ENCODE measurements at regions of chr11 and their contacts with region 1.

Region 1: GRCh38 chr11:112024773-112025678 is at the start of gene DLAT:
- DNase-seq: peak; percentile 80 to 88
- ATAC-seq: peak; percentile 94 to 95
- H3K4me3 ChIP-seq: peak within 1 kb of the TSS; percentile 92 to 96 (median 94)
- H3K27ac ChIP-seq: peak within 1 kb of the TSS; percentile 89 to 98 (median 94)
- H3K4me1 ChIP-seq: peaks cover 11 to 17% of the 10 kb centered on the region in 2 donors
- H3K27me3 ChIP-seq: no peaks in the 10 kb centered on the region
- CTCF ChIP-seq: no peak
- POLR2A ChIP-seq: peak; percentile 35 to 68
- total RNA-seq, gene DLAT: 60.1 to 117 (median 67.8) TPM

Region 2: DNA sequence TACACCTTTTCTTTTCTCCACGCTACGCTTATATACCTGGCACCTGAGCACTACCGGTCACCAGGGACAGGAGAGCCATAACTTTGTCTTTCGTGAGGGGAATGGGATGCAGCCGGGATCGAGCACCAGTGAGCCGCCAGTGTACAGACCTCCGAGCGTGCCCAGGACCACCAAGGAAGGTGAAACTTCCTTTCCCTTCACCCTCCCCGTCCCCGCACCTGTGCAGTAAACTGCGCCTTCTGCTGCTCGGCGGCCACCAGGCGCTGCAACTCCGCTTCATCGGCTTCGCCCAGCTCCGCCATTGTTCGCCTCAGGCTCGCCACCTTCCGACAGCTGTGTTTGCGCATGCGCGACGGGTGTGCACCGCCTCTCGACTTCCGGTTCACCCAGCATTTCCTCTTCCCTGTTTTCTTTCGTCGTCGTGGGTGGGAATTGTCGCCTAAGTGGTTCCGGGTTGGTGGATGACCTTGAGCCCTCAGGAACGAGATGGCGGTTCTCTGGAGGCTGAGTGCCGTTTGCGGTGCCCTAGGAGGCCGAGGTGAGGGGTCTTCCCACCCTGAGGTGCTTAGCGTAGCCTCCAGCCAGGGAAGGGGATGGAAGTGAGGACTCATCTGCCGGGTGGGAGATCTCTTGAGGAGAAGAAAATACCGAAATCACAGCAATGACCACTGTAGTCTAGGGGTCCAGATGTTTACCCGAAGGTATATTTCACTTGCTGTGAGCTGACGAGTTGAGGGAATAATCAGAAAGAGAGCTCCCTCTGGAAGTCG is 61.6 kb after region 1 on chr11 and contains the starts of genes SDHD and TIMM8B:
- in situ Hi-C with region 1: no loop called
- intact Hi-C with region 1: loop called (anchors 5 kb)
- DNase-seq: peak; percentile 94 to 96
- ATAC-seq: peak; percentile 96 to 97
- H3K4me3 ChIP-seq: peak within 1 kb of the TSS; percentile 82 to 99 (median 90)
- H3K27ac ChIP-seq: peak within 1 kb of the TSS; percentile 79 to 97 (median 90)
- H3K4me1 ChIP-seq: peaks cover 49 to 66% of the 10 kb centered on the region in 2 donors
- H3K27me3 ChIP-seq: no peaks in the 10 kb centered on the region
- CTCF ChIP-seq: peak in 4 of 5 experiments; percentile 19 to 39 (median 33)
- POLR2A ChIP-seq: peak; percentile 86 to 92
- total RNA-seq, gene SDHD: 170 to 261 (median 202) TPM
- total RNA-seq, gene TIMM8B: 60.3 to 93.2 (median 69.4) TPM